Sciatic nerve (tissue), 2 donors: ENCODE measurements at regions of chr15 and their contacts with region 1.

Region 1: DNA sequence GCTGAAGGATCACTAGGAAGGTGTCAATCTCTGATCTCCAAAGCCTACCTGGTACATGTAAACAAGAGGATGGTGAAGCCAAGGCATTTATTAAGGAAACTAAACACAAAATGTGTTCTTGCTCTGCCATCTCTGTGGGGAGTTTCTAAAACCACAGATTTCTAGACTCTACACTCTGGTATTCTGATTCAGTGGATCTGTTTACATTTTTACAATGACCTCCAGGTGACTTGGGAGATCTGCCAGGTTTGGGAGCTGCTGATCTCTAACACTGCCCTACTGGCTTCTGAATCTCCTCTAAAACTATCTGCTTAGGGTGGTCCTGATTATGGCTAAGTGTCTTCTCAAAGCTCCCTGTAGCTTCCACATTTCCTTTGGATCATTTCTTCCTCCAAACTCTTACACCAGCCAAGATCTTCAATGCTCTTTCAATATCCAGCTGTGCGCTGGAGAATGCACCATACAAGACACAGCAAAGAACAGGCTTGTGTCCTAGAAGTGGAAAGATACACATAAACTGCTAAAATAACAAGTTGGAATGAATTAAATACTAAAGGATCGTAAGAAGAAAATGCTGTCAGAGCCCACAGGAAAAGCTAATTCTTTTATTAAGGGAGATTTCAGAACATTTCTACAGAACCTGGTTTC is 72.7 kb downstream of the GREM1 start:
- DNase-seq: no peak
- ATAC-seq: no peak

Region 2: DNA sequence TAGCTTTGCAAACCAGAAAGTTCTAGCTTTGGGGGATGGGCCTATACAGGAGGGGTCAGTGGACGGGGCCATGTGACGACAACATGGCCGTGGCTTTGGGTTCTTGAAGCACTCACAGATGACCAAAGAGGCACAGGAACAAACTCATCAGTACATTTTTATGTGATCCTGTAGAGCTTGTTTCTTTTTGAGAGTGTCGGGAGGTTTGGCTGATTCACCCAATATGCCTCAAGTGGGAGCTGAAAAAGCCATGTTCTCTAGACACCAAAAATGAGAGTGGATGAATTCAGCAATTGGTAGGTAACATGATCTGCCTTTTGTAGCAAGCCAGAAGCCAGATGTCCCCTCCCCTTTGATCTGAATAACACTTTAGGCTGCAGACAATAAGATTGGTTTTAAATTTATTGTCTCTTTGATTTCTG is 42.5 kb before region 1 on chr15:
- intact Hi-C with region 1: loop called (anchors 1 kb)
- DNase-seq: no peak
- ATAC-seq: no peak